ENCODE measurements at regions of chr5 and their contacts with region 1.

Region 1: DNA sequence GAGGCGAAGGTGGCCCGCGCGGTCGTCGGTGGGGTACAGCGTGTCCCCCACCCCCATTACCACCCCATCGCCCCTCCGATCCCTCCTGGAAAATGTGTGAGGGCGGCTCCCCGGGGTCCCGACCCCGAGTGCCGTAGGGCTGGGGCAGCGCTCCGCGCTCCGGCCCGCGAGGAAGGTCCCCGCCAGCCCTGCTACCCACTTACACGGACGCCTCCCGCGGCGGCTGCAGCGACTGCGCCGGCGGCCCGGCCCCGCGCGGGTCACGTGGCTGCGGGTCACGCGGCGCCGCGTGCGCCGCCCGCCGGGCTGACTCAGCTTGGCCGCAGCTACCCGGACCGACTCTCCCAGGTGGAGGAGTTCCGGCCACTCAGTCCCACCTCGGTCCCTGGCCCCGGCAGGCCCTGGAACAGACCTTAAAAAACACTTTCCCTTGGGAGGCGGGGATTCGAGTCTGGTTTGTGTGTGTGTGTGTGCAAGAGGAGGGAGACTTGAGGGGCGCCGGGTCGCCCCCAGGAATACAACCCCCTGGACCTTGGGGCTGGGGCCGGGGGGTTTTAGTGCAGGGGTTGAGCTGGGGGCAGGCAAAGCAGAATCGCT is at the start of gene GNPDA1:
- DNase-seq: peak; percentile 80 to 90 (median 84)
- H3K4me3 ChIP-seq: peak within 1 kb of the TSS; percentile 78
- H3K27ac ChIP-seq: peak within 1 kb of the TSS; percentile 76 to 91
- H3K4me1 ChIP-seq: no peaks in the 10 kb centered on the region
- H3K27me3 ChIP-seq: no peaks in the 10 kb centered on the region
- CTCF ChIP-seq: peak in 2 of 3 donors; percentile 32 to 54
- EP300 ChIP-seq: no peak
- POLR2A ChIP-seq: peak; percentile 52
- total RNA-seq, gene GNPDA1: 20.3 to 40.9 (median 35.1) TPM

Region 2: GRCh38 chr5:141973871-141974595 is 38.9 kb before region 1 on chr5:
- intact Hi-C with region 1: no loop called
- DNase-seq: no peak
- H3K4me3 ChIP-seq: no peak overlapping the region
- H3K27ac ChIP-seq: no peak overlapping the region
- H3K4me1 ChIP-seq: peaks cover 2% of the 10 kb centered on the region
- H3K27me3 ChIP-seq: no peaks in the 10 kb centered on the region
- CTCF ChIP-seq: no peak
- EP300 ChIP-seq: no peak
- POLR2A ChIP-seq: no peak

Region 3: GRCh38 chr5:142108432-142109330 is 95.8 kb after region 1 on chr5 and contains the start of gene NDFIP1:
- intact Hi-C with region 1: loop called in 2 of 4 experiments (anchors 5 to 10 kb)
- DNase-seq: peak; percentile 80 to 89 (median 84)
- H3K4me3 ChIP-seq: peak within 1 kb of the TSS; percentile 99
- H3K27ac ChIP-seq: peak within 1 kb of the TSS; percentile 97 to 98
- H3K4me1 ChIP-seq: no peaks in the 10 kb centered on the region
- H3K27me3 ChIP-seq: no peaks in the 10 kb centered on the region
- CTCF ChIP-seq: peak in 2 of 3 donors; percentile 15 to 20
- EP300 ChIP-seq: no peak
- POLR2A ChIP-seq: peak; percentile 90
- total RNA-seq, gene NDFIP1: 61.0 to 96.0 (median 70.0) TPM